PC-9 (cell line): ENCODE measurements at regions of chr7 and their contacts with region 1.

Region 1: GRCh38 chr7:47215049-47215448 is 366.9 kb downstream of the TNS3 start:
- DNase-seq: no peak
- H3K4me3 ChIP-seq: no peak overlapping the region
- H3K27ac ChIP-seq: no peak overlapping the region
- H3K4me1 ChIP-seq: no peaks in the 10 kb centered on the region
- H3K27me3 ChIP-seq: peaks cover 15% of the 10 kb centered on the region; the same call in 1 of the 2 replicates
- CTCF ChIP-seq: no peak

Region 2: GRCh38 chr7:48168159-48168558 is 953.1 kb after region 1 on chr7:
- CTCF ChIA-PET with region 1: interaction called, 19 read pairs
- POLR2A ChIA-PET with region 1: no interaction called
- intact Hi-C with region 1: no loop called
- DNase-seq: peak; percentile 23 to 58
- H3K4me3 ChIP-seq: no peak overlapping the region
- H3K27ac ChIP-seq: no peak overlapping the region
- H3K4me1 ChIP-seq: no peaks in the 10 kb centered on the region
- H3K27me3 ChIP-seq: peaks cover 5% of the 10 kb centered on the region; the same call in 1 of the 2 replicates
- CTCF ChIP-seq: no peak; the same call in 1 of the 2 replicates